Endothelial cell of umbilical vein (primary cell): ENCODE measurements at regions of chr17 and their contacts with region 1.

Region 1: GRCh38 chr17:41801374-41802271 is 10.1 kb downstream of the P3H4 start:
- DNase-seq: peak; percentile 77
- H3K4me3 ChIP-seq: no peak overlapping the region
- H3K27ac ChIP-seq: no peak overlapping the region
- H3K4me1 ChIP-seq: peaks cover 8% of the 10 kb centered on the region
- H3K27me3 ChIP-seq: no peaks in the 10 kb centered on the region
- CTCF ChIP-seq: peak; percentile 84 to 95
- POLR2A ChIP-seq: peak; percentile 65

Region 2: DNA sequence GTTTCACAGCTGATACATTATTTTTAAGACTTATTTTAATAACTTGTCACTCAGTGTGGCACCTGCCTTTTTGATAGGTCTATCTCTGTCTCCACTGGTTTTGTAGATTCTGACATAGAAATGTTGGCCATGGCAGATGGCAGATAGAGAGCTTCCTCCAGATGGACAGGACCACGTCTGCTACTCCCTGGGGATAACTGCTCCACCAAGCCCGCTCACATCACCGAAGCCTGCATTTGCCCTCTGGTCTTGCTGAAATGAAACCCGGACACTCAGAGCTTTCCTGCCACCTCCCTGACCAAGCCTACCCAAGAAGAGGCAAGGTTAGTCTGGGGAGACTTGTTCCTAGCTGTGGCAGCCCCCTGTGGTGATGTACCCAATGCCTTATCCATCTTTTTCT is 50.8 kb before region 1 on chr17:
- CTCF ChIA-PET with region 1: interaction called, 23 read pairs
- POLR2A ChIA-PET with region 1: no interaction called
- dilution Hi-C with region 1: loop called (anchors 10 kb)
- intact Hi-C with region 1: no loop called
- DNase-seq: no peak
- H3K4me3 ChIP-seq: no peak overlapping the region
- H3K27ac ChIP-seq: no peak overlapping the region
- H3K4me1 ChIP-seq: no peaks in the 10 kb centered on the region
- H3K27me3 ChIP-seq: peaks cover 0 to under 1% of the 10 kb centered on the region in 2 experiments
- CTCF ChIP-seq: no peak
- POLR2A ChIP-seq: no peak

Region 3: GRCh38 chr17:41777574-41778188 is 23.9 kb before region 1 on chr17:
- CTCF ChIA-PET with region 1: interaction called, 67 read pairs
- POLR2A ChIA-PET with region 1: interaction called, 10 read pairs
- dilution Hi-C with region 1: no loop called
- intact Hi-C with region 1: loop called (anchors 1 kb)
- DNase-seq: peak; percentile 100
- H3K4me3 ChIP-seq: no peak overlapping the region
- H3K27ac ChIP-seq: peak overlapping the region; percentile 97
- H3K4me1 ChIP-seq: peaks cover 45% of the 10 kb centered on the region
- H3K27me3 ChIP-seq: no peaks in the 10 kb centered on the region
- CTCF ChIP-seq: peak in 1 of 2 donors; percentile 36
- POLR2A ChIP-seq: peak; percentile 65

Region 4: GRCh38 chr17:41786227-41787020 is 15.2 kb before region 1 on chr17 and contains the start of gene JUP:
- CTCF ChIA-PET with region 1: interaction called, 98 read pairs
- POLR2A ChIA-PET with region 1: interaction called, 9 read pairs
- dilution Hi-C with region 1: no loop called
- intact Hi-C with region 1: loop called (anchors 2 kb)
- DNase-seq: peak; percentile 100
- H3K4me3 ChIP-seq: peak within 1 kb of the TSS; percentile 14 to 98 (median 52)
- H3K27ac ChIP-seq: peak within 1 kb of the TSS; percentile 19
- H3K4me1 ChIP-seq: no peaks in the 10 kb centered on the region
- H3K27me3 ChIP-seq: peaks cover 0 to 7% of the 10 kb centered on the region in 2 experiments
- CTCF ChIP-seq: peak; percentile 66 to 81
- POLR2A ChIP-seq: peak; percentile 81
- total RNA-seq, gene JUP: 170 and 171 TPM in 2 replicates

Region 5: GRCh38 chr17:41811549-41812380 is 10.1 kb after region 1 on chr17 and contains the start of gene P3H4:
- CTCF ChIA-PET with region 1: interaction called, 14 read pairs
- POLR2A ChIA-PET with region 1: no interaction called
- dilution Hi-C with region 1: no loop called
- intact Hi-C with region 1: no loop called
- DNase-seq: peak; percentile 84
- H3K4me3 ChIP-seq: peak within 1 kb of the TSS; percentile 51 to 81 (median 78)
- H3K27ac ChIP-seq: peak within 1 kb of the TSS; percentile 46
- H3K4me1 ChIP-seq: peaks cover 26% of the 10 kb centered on the region
- H3K27me3 ChIP-seq: no peaks in the 10 kb centered on the region
- CTCF ChIP-seq: peak; percentile 60 to 85
- POLR2A ChIP-seq: peak; percentile 90
- total RNA-seq, gene P3H4: 37.1 and 39.2 TPM in 2 replicates